ENCODE measurements at regions of chr3 and their contacts with region 1.

Region 1: GRCh38 chr3:8027954-8028353 is 473.7 kb upstream of the LMCD1 start:
- DNase-seq: no peak
- H3K27ac ChIP-seq: no peak overlapping the region
- CTCF ChIP-seq: no peak

Region 2: DNA sequence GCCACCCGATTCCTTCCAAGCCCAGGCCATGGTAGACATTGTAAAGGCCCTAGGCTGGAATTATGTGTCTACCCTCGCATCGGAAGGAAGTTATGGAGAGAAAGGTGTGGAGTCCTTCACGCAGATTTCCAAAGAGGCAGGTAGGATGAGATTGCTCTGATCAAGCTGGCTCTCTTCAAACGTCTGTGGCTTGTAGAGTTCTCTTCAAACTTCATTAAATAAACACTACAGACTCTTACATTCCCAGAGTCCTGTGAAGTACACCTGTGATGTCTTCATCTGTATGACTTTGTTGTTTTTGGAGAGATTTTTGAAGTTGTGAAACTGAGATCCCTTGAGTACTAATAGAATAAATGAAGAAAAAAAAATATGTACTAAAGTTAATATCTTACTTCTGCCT is 881.4 kb before region 1 on chr3:
- CTCF ChIA-PET with region 1: interaction called, 10 read pairs
- POLR2A ChIA-PET with region 1: no interaction called
- DNase-seq: no peak
- H3K27ac ChIP-seq: no peak overlapping the region
- CTCF ChIP-seq: no peak

Measured in RWPE1 (cell line).